Esophagus squamous epithelium (tissue), 5 donors: ENCODE measurements at regions of chr4 and their contacts with region 1.

Region 1: DNA sequence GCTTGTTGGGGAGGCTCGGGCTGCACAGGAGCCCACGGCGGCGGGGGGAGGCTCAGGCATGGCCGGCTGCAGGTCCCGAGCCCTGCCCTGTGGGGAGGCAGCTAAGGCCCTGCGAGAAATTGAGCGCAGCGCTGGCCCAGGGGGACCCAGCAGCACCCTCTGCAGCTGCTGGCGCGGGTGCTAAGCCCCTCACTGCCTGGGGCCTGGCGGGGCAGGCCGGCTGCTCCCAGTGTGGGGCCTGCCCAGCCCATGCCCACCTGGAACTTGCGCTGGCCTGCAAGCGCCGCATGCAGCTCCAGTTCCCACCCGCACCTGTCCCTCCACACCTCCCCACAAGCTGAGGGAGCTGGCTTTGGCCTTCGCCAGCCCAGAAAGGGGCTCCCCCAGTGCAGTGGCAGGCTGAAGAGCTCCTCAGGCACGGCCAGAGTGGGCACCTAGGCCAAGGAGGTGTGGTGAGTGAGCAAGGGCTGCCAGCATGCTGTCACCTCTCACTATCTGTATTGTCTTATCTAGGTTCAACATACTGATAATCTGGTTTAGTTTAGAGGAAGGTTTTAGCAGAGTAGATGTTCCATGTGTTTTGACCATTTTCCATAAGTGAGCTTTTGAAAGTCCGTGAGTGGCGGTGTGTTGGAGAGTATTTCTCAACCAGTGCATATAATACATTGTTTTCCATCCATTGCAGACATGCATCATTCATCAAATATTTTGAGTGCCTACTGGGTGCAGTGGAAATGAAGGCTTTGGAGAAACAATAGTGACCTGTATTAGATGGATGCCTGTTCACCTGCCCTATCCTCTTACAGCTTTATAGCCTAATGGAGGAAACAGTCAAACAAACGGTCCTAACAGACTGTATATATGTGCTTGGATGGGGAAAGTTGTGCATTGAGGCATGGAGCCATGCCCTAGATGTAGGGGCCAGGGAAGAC is 13.1 kb downstream of the PI4K2B start:
- DNase-seq: no peak
- H3K4me3 ChIP-seq: no peak overlapping the region
- H3K27ac ChIP-seq: no peak overlapping the region
- H3K4me1 ChIP-seq: no peaks in the 10 kb centered on the region
- H3K27me3 ChIP-seq: no peaks in the 10 kb centered on the region
- CTCF ChIP-seq: no peak
- POLR2A ChIP-seq: no peak

Region 2: GRCh38 chr4:25299480-25300188 is 52.7 kb after region 1 on chr4:
- intact Hi-C with region 1: loop called (anchors 10 kb)
- DNase-seq: no peak
- H3K4me3 ChIP-seq: no peak overlapping the region
- H3K27ac ChIP-seq: peak overlapping the region in 3 of 4 donors; percentile 10 to 47 (median 42)
- H3K4me1 ChIP-seq: peaks cover 0 to 17% (median 6%) of the 10 kb centered on the region in 3 donors
- H3K27me3 ChIP-seq: peaks cover 0 to 5% (median 0%) of the 10 kb centered on the region in 4 donors
- CTCF ChIP-seq: peak in 3 of 6 experiments; percentile 6 to 38 (median 16)
- POLR2A ChIP-seq: no peak

Region 3: DNA sequence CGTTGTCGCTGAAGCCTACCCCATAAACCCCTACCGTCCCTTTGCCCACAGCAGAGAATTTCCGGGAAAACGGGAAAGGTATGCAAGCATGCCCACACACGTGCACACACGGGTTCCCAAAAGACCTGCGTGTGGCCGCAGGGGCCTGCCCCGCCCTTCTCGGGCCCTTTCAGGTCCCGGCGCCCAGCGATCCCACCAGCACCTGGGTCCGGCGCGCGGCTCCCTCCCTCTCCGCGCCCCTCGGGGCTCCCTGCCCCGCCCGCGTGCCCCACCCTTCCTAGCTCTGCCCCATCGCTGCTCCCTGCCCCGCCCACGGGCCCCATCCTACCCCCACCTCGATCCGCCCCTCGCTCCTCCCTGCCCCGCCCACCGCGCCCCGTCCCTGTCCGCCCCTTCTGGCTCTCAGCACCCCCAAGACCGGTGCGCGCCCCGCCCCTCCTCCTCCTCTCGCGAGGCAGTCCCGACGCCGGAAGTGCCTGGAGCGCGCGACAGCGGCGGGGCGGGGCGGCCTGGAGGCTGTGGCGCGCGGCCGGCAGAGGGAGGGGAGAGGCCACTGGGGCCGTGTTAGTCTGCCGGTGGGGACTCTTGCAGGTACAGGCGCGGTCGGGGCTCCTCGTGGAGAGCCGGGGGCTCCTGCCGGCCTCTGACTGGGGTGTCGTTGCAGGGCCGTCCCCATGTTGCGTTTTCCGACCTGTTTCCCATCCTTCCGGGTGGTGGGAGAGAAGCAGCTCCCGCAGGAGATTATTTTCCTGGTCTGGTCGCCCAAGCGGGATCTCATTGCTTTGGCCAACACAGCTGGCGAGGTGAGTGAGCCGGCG is 130.0 kb after region 1 on chr4 and contains the start of gene ANAPC4:
- intact Hi-C with region 1: no loop called
- DNase-seq: peak; percentile 87
- H3K4me3 ChIP-seq: peak within 1 kb of the TSS; percentile 81 to 95 (median 94)
- H3K27ac ChIP-seq: peak within 1 kb of the TSS; percentile 85 to 91 (median 87)
- H3K4me1 ChIP-seq: peaks cover 8 to 33% (median 10%) of the 10 kb centered on the region in 3 donors
- H3K27me3 ChIP-seq: no peaks in the 10 kb centered on the region
- CTCF ChIP-seq: peak in 4 of 6 experiments; percentile 15 to 28 (median 22)
- POLR2A ChIP-seq: peak in 2 of 4 donors; percentile 19 to 73
- total RNA-seq, gene ANAPC4: 9.6 to 27.0 (median 20.0) TPM